Posterior cingulate gyrus (tissue), 11 donors: ENCODE measurements at regions of chr17 and their contacts with region 1.

Region 1: DNA sequence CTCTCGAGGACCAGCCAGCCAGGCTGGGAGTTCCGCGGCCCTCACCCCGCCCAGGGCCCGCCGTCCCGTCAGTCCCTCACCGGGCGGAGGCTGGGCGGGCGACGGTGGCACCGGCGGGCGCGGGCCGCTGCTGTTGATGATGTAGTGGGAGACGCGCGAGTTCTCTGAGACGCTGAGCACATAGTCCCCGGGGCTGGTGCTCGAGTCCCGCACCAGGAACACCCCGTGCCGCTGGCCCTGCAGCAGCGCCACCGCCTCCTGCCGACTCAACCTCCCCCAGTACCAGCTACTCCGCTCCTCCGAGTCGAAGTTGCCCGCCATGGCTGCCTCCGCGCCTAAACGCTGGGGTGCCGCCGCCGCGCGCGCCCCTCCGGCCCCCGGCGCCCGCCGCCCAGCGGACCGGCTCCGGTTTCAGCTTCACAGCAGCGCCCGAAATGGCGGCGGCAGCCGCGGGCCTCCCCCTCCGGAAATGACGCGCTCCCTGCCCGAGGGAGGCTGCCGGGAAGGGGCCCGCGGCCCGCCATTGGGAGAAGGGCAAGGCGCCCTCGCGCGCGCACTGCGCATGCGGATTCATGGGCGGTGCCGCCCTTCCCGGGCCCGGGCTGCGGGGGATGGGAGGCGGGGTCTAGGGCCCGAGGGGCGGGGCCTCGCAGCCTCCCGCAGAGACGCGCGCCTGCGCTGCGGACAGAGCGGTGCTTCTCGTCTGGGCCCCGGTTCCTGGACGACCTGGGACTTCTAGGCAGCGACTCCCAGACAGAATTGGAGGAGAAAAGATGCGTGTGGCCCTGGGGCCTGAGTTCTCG is at the start of gene CRK:
- DNase-seq: peak; percentile 92 to 100 (median 96)

Region 2: GRCh38 chr17:1365445-1366039 is 90.5 kb before region 1 on chr17:
- intact Hi-C with region 1: loop called (anchors 2 kb)
- DNase-seq: peak in 6 of 10 donors; percentile 40 to 92 (median 49)

Region 3: GRCh38 chr17:1399679-1400512 is 56.1 kb before region 1 on chr17 and contains the start of gene YWHAE:
- intact Hi-C with region 1: loop called (anchors 2 kb)
- DNase-seq: peak; percentile 94 to 99 (median 96)

Region 4: DNA sequence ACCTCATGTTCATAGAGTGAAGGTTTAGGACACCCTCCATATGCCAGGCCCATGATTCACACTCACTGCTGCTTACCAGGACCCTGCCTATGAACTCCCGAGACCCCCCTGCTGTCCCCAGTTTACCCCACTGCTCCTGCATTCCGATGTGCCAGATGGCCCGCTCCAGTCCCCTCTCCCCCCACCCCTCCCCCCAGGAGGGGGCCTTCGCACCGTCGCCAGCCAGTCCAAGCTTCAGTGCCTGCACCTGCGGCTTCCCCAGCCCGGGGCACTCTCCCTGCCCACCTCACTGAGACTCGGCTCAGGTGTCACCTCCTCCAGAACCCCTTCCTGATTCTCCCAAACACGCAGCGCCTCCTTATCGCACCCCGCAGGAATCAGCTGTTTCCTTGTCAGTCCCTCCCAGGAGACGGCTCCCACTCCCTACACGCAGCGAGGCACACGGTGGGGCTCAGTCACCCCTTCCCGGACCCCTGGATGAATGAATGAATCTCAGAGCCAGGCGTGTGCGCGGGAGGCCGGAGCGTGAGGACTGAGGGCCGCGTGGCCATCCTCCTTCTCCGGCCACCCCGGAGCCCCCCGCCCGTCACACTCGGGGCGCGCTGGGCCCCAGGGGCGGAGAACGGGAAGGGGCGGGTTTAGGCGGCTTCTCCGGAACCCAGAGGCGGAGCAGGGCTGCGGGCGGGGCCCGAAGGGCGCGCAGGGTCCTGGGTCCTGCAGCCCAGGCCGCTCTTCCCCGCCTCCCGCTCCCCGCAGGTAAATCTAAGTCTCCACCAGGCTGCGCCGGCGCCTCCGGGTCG is 34.8 kb after region 1 on chr17:
- intact Hi-C with region 1: loop called (anchors 5 kb)
- DNase-seq: peak in 6 of 10 donors; percentile 34 to 91 (median 50)

Region 5: DNA sequence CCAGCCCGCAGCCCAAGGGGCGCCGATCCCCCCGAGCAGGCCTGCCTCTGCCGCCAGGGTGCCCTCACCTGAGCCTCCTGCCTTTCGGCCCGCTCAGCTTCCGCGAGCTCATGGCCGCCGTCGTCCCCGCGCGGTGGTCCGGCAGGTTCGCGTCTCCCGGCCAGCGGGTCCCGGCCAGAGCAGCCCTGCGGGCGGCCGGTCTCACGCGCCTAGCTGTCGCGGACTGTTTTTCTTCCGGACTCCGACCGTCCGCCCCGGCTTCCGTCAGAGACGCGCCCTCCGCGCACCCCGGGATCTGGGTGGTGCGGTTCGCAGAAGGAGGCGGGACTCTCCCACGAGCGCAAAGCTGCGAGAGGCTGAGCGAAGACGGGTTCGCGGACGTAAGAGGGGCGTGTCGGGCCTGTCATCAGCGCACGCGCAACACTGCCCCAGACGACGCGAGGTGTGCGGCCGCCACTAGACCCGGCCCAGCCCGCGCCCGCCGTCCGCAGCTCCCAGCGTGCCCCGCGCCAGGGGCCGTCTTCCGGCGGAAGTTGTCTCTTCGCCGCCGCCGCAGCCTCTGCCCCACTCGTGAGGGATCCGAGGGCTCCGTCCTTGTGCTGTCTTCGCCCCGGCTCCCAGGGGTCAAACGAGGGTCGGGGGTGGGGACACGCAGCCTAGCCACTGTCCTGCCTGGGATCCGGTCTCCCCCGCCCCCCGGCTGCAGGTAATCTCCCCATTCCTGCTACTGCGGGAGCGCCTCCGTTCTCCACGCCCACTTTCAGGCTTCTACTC is 60.6 kb after region 1 on chr17 and contains the start of gene INPP5K:
- intact Hi-C with region 1: loop called (anchors 1 kb)
- DNase-seq: peak; percentile 97 to 100 (median 98)